ENCODE measurements at regions of chr18 and their contacts with region 1.

Region 1: DNA sequence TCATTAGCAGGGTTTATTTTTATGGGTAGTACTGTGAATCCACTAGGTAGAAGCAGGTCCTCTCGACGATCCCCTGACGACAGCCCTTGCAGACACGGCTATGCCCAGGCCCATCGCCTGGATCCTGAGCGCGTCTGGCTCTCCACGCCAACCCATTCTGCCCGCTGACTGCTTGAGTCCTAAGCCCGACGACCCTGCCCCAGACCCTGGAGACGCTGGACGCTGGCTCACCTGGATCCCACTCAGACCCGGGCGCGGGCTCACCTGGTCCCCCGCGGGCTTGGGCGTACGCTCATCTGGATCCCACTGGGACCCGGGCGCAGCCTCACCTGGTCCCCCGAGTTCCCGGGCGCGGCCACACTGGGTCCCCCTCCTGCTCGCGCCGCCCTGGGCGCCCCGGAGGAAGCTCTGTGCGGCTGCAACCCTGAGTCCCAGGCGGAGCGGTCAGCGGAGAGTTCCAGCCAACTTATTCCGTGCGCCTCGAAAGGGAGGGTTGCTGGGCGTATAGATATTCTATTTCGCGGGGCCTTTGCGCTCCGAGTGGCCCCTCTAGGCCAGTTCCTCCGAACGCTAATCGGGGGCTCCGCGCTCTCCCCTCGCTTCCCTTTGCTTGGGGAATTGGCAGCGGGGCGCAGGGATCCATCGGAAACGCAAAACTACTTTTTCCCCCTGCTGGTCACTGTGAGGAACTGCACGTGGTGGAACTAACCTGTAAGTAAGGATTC is 22.4 kb upstream of the RMP24 start:
- DNase-seq: no peak
- H3K4me3 ChIP-seq: peak overlapping the region; percentile 66
- CTCF ChIP-seq: peak; percentile 85

Region 2: GRCh38 chr18:35386600-35387351 is 563.3 kb before region 1 on chr18:
- CTCF ChIA-PET with region 1: interaction called, 16 read pairs
- POLR2A ChIA-PET with region 1: no interaction called
- DNase-seq: no peak
- H3K4me3 ChIP-seq: no peak overlapping the region
- CTCF ChIP-seq: peak; percentile 75

Region 3: DNA sequence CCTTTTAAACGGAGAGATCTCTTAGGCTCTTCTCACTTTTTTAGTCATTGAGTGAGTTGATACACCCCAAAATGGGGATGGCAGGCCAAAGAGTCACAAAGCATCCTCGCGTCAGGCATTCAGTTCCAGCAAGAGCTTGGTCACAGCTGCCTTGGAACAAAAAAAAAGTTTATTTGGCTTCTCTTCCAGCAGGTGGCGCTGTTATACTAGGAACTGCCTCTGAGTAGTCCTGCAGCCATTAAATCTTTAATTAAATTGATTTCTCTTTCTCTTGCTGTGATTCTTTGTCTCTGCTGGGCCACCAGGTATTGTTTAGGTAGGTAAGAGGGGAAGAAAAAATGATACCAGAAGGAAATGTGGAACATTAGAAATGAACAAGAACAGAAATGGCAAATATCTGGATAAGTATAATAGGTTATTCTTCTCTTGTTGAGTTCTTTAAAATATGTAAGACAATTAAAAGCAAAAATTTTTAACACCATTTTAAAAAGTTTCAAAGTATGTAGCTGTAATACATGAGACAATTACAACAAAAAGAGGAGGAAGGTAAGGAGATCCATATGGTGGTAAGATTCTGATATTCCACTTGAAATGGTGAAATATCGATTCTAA is 193.5 kb before region 1 on chr18:
- CTCF ChIA-PET with region 1: interaction called, 22 read pairs
- POLR2A ChIA-PET with region 1: no interaction called
- DNase-seq: no peak
- H3K4me3 ChIP-seq: no peak overlapping the region
- CTCF ChIP-seq: peak; percentile 53

Region 4: GRCh38 chr18:35939138-35939537 is 10.9 kb before region 1 on chr18:
- CTCF ChIA-PET with region 1: interaction called, 19 read pairs
- POLR2A ChIA-PET with region 1: no interaction called
- DNase-seq: no peak
- H3K4me3 ChIP-seq: no peak overlapping the region
- CTCF ChIP-seq: no peak

Region 5: GRCh38 chr18:35964319-35964718 is 14.3 kb after region 1 on chr18:
- CTCF ChIA-PET with region 1: interaction called, 15 read pairs
- POLR2A ChIA-PET with region 1: no interaction called
- DNase-seq: no peak
- H3K4me3 ChIP-seq: no peak overlapping the region
- CTCF ChIP-seq: no peak

Region 6: GRCh38 chr18:35972197-35973052 is 22.4 kb after region 1 on chr18 and contains the start of gene RMP24:
- CTCF ChIA-PET with region 1: interaction called, 17 read pairs
- POLR2A ChIA-PET with region 1: no interaction called
- DNase-seq: peak; percentile 72
- H3K4me3 ChIP-seq: peak within 1 kb of the TSS; percentile 95
- CTCF ChIP-seq: no peak

Measured in AG04449 (cell line).